ENCODE measurements at regions of chr9 and their contacts with region 1.

Region 1: DNA sequence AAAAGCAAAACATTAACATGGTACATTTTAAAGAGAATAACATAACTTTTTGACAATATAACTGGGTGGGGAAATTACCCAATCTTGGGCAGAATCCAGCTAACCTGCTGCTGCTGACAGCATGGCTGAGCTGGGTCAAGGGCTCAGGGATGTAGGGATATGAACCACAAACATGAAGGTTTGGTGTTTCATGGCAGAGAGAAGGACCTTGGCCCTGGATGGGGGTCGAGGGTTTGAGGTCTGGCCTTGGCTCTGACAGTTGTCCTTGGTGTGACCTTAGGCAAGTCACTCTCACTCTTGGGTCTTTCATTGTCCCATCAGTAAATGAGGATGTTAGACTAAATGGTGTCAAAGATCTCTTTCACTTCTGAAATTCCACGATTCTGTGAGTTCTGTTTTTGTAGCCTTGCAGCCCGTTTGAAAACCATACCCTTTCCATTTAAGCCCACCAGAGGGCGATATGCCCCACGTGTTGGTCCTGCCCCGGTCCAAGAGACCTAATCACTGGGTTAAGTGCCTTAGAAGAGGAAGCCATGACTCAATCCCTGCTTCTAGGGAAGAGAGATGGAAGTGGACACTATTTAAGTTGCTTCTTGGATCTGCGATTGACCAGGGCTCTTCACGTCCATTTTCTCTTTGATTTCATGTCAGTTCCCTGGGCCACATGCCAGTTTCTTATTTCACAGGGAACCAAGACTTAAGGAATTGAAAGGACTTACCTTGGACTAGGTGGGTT is 56.8 kb upstream of the TEX48 start:
- DNase-seq: peak; percentile 63
- ATAC-seq: peak; percentile 85 to 96

Region 2: GRCh38 chr9:114759512-114760341 is 21.0 kb after region 1 on chr9:
- intact Hi-C with region 1: no loop called
- DNase-seq: no peak
- ATAC-seq: peak; percentile 12 to 65

Region 3: DNA sequence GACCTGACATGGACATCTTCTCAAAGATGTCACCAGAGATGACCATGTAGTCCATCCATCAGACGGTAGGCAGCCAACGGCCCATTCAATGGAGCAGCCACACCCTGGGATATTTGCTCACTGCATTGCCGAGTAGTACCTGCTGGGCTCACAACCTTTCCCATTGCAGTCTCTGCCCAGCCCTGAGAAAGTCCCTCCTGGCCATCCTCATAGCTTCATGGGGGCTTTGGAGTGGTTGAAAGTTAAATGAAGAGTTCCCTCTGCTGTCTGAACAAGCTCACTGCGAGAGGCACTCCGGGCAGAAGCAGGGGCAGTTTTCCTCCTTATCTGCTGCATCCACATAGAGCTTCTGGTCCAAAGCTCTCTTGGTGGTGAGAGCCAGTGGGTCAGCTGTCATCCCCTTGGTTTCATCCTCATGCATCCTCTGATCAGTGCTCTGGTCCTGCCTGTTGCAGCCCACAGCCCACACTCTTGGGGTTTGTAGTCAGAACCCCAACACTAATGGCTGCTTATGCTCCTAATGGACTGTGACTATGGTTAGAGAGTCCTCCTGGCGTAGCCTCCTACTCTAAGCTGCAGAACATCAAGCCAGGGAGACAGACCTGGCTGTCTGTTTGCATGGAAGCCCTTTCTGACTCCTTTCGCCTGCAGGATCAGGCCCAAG is 168.3 kb after region 1 on chr9:
- intact Hi-C with region 1: loop called (anchors 2 to 10 kb)
- DNase-seq: no peak
- ATAC-seq: peak; percentile 29 to 36